AG04449 (cell line): ENCODE measurements at regions of chr7 and their contacts with region 1.

Region 1: DNA sequence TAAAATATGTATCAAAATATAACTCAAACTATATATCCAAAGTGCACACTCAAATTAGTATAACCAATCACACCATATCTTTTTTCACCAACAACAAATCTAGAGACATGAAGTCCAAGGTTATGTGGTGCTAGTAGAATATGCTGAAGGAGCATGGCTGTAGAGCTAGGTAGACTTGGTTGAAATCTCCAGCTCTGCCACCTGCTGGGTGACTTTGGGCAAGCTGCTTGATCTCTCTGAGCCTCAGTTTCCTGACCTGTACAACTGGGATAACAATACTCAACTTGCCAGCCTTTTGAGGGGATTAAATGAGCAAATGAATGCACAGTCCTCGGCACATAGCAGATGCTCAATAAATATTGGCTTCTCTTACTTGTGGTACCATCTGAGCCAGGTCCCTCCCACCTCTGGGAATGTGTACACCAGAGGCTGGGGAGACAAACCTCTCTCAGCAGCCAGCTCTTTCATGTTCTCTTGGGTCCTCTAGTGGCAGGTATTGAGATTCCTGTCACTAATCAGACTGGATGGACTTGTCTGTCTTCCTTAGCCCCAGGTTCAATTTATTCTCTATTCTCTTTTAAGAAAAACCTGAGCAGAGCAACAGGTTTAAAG is 94.2 kb upstream of the PDE1C start:
- DNase-seq: no peak
- H3K4me3 ChIP-seq: no peak overlapping the region
- CTCF ChIP-seq: peak; percentile 60

Region 2: DNA sequence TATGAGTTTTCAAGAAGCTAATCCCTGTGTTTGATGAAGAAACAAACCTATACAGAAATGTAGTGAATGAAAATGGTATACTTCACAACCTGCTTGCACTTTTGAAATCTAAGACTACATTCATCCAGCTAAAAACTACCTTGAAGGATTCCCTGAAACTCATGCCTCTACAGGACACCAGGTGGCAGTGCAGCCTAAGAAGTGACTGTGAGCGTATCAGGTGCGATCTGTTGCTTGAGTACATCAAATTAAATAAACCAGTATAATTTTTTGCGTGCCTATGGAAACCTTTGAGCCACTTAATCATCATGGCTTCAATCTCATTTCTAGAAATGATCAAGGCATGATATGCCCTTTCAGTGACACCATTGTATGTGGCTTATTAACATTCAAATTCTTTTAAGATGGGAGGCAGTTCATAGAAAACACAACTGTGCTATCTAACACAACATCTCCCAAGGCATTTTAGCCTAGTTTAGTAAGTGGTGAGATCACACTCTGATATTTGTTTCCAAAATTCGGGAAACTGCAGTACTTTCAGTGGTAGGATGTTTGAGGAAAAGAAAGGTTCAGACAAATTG is 420.1 kb before region 1 on chr7:
- CTCF ChIA-PET with region 1: interaction called, 41 read pairs
- POLR2A ChIA-PET with region 1: no interaction called
- DNase-seq: peak; percentile 29
- H3K4me3 ChIP-seq: no peak overlapping the region
- CTCF ChIP-seq: peak; percentile 76

Region 3: GRCh38 chr7:32062150-32062549 is 102.3 kb before region 1 on chr7:
- CTCF ChIA-PET with region 1: interaction called, 28 read pairs
- POLR2A ChIA-PET with region 1: interaction called, 4 read pairs
- DNase-seq: no peak
- H3K4me3 ChIP-seq: no peak overlapping the region
- CTCF ChIP-seq: peak; percentile 40

Region 4: GRCh38 chr7:32070406-32071360 is 93.8 kb before region 1 on chr7 and contains the start of gene PDE1C:
- CTCF ChIA-PET with region 1: interaction called, 28 read pairs
- POLR2A ChIA-PET with region 1: interaction called, 7 read pairs
- DNase-seq: no peak
- H3K4me3 ChIP-seq: peak within 1 kb of the TSS; percentile 77
- CTCF ChIP-seq: no peak

Region 5: GRCh38 chr7:32142649-32143048 is 21.8 kb before region 1 on chr7:
- CTCF ChIA-PET with region 1: interaction called, 7 read pairs
- POLR2A ChIA-PET with region 1: interaction called, 13 read pairs
- DNase-seq: peak; percentile 81
- H3K4me3 ChIP-seq: no peak overlapping the region
- CTCF ChIP-seq: no peak

Region 6: GRCh38 chr7:32175099-32175498 is 10.6 kb after region 1 on chr7:
- CTCF ChIA-PET with region 1: interaction called, 16 read pairs
- POLR2A ChIA-PET with region 1: no interaction called
- DNase-seq: no peak
- H3K4me3 ChIP-seq: no peak overlapping the region
- CTCF ChIP-seq: no peak